ENCODE measurements at regions of chr17 and their contacts with region 1.

Region 1: DNA sequence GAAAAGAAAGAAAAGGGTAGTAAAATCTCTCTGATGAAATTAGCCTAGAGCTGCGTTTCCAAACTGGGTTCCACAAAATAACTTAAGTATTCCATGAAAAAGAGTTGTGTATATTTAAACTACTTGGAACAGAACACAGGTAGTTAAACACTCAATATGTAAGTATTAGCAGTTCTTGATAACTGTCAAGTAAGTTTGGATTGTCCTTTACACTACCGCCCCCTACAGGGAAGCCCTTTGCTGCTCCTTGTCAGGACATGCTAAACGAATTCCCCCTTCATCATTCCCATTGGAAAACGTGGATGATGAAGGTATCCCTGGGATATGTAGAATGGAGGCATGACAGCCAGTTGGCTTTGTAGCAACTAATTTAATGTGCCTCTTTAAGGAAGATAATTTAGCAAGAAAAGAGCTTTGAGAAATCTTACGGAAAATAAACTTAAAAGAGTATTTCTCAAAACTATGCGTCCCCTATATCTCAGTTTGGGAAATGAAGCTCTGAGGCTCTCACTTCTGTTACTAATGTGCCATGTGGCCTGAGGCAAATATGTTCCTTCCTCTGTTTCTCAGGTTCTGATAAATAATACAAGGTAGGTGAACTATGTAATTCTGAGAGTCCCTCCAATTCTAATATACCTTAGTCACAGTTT is 18.8 kb downstream of the NCBP3 start:
- DNase-seq: peak; percentile 72
- H3K4me3 Mint-ChIP-seq: no peak overlapping the region
- H3K27ac Mint-ChIP-seq: no peak overlapping the region
- H3K4me1 Mint-ChIP-seq: no peaks in the 10 kb centered on the region
- H3K27me3 Mint-ChIP-seq: no peaks in the 10 kb centered on the region

Region 2: GRCh38 chr17:3730881-3731429 is 96.3 kb before region 1 on chr17:
- CTCF ChIA-PET with region 1: interaction called, 402 read pairs
- POLR2A ChIA-PET with region 1: no interaction called
- intact Hi-C with region 1: no loop called
- DNase-seq: no peak
- H3K4me3 Mint-ChIP-seq: no peak overlapping the region
- H3K27ac Mint-ChIP-seq: no peak overlapping the region
- H3K4me1 Mint-ChIP-seq: peaks cover 7% of the 10 kb centered on the region
- H3K27me3 Mint-ChIP-seq: no peaks in the 10 kb centered on the region

Region 3: GRCh38 chr17:3754458-3755334 is 72.6 kb before region 1 on chr17:
- CTCF ChIA-PET with region 1: interaction called, 11 read pairs
- POLR2A ChIA-PET with region 1: no interaction called
- intact Hi-C with region 1: no loop called
- DNase-seq: peak; percentile 81
- H3K4me3 Mint-ChIP-seq: peak overlapping the region; percentile 20
- H3K27ac Mint-ChIP-seq: no peak overlapping the region
- H3K4me1 Mint-ChIP-seq: peaks cover 26% of the 10 kb centered on the region
- H3K27me3 Mint-ChIP-seq: no peaks in the 10 kb centered on the region

Region 4: GRCh38 chr17:3812771-3813170 is 14.5 kb before region 1 on chr17:
- CTCF ChIA-PET with region 1: interaction called, 20 read pairs
- POLR2A ChIA-PET with region 1: no interaction called
- intact Hi-C with region 1: no loop called
- DNase-seq: no peak
- H3K4me3 Mint-ChIP-seq: no peak overlapping the region
- H3K27ac Mint-ChIP-seq: no peak overlapping the region
- H3K4me1 Mint-ChIP-seq: peaks cover 9% of the 10 kb centered on the region
- H3K27me3 Mint-ChIP-seq: no peaks in the 10 kb centered on the region

Region 5: GRCh38 chr17:4287710-4288109 is 460.5 kb after region 1 on chr17:
- CTCF ChIA-PET with region 1: no interaction called
- POLR2A ChIA-PET with region 1: no interaction called
- intact Hi-C with region 1: no loop called
- DNase-seq: no peak
- H3K4me3 Mint-ChIP-seq: no peak overlapping the region
- H3K27ac Mint-ChIP-seq: no peak overlapping the region
- H3K4me1 Mint-ChIP-seq: no peaks in the 10 kb centered on the region
- H3K27me3 Mint-ChIP-seq: no peaks in the 10 kb centered on the region

Region 6: GRCh38 chr17:5329784-5330557 is 1502.7 kb after region 1 on chr17:
- CTCF ChIA-PET with region 1: no interaction called
- POLR2A ChIA-PET with region 1: no interaction called
- intact Hi-C with region 1: no loop called
- DNase-seq: no peak
- H3K4me3 Mint-ChIP-seq: no peak overlapping the region
- H3K27ac Mint-ChIP-seq: peak overlapping the region; percentile 65
- H3K4me1 Mint-ChIP-seq: peaks cover 34% of the 10 kb centered on the region
- H3K27me3 Mint-ChIP-seq: no peaks in the 10 kb centered on the region

Measured in activated CD4-positive, alpha-beta memory T cell treated with anti-CD3 and anti-CD28 coated beads for 36 hours (primary cell).